Naive thymus-derived CD4-positive, alpha-beta T cell (primary cell): ENCODE measurements at regions of chr4 and their contacts with region 1.

Region 1: DNA sequence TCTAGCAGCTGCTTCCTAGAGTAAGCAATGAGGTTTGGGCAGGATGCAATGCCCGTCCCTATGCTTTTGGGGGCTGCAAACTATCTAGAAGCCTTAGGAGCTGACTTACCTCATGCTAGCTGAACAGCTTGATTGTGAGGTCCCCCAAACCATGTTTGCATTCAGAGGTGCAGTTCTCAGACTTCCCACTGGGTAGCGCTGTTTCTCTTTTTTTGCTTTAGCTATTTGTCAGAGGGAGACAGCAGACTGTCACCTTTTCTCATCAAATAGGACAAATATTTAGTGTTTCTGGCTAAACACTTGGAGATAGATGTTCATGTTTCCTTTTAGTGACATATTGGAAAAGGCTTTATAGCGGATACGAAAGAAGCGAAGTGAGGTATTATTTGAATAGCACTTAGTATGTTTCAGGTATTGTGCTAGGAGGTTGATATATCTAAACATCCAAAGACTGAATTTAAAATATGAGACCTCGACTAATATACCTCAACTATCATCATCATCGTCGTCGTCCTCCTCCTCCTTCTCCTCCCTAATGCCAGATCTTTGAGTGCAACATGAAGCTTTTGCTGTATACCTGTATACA is 18.7 kb upstream of the TMEM192 start:
- DNase-seq: peak; percentile 47 to 85 (median 68)
- ATAC-seq: peak; percentile 89
- H3K4me3 ChIP-seq: no peak overlapping the region
- H3K4me3 Mint-ChIP-seq: peak overlapping the region in 1 of 10 donors; percentile 14
- H3K27ac ChIP-seq: no peak overlapping the region
- H3K27ac Mint-ChIP-seq: peak overlapping the region in 1 of 9 donors; percentile 13
- H3K4me1 ChIP-seq: no peaks in the 10 kb centered on the region
- H3K4me1 Mint-ChIP-seq: peaks cover 4 to 12% (median 10%) of the 10 kb centered on the region in 7 donors
- H3K27me3 ChIP-seq: no peaks in the 10 kb centered on the region
- H3K27me3 Mint-ChIP-seq: peaks cover 0 to 17% (median 5%) of the 10 kb centered on the region in 5 donors

Region 2: GRCh38 chr4:165118256-165118909 is 13.0 kb before region 1 on chr4:
- CTCF ChIA-PET with region 1: interaction called, 12 read pairs
- POLR2A ChIA-PET with region 1: no interaction called
- intact Hi-C with region 1: loop called in 1 of 2 experiments (anchors 1 kb)
- DNase-seq: no peak
- ATAC-seq: no peak
- H3K4me3 ChIP-seq: no peak overlapping the region
- H3K4me3 Mint-ChIP-seq: no peak overlapping the region
- H3K27ac ChIP-seq: no peak overlapping the region
- H3K27ac Mint-ChIP-seq: no peak overlapping the region
- H3K4me1 ChIP-seq: peaks cover 0 to 4% of the 10 kb centered on the region in 2 donors
- H3K4me1 Mint-ChIP-seq: peaks cover 0 to 5% (median under 1%) of the 10 kb centered on the region in 7 donors
- H3K27me3 ChIP-seq: no peaks in the 10 kb centered on the region
- H3K27me3 Mint-ChIP-seq: peaks cover 0 to 35% (median 5%) of the 10 kb centered on the region in 5 donors

Region 3: DNA sequence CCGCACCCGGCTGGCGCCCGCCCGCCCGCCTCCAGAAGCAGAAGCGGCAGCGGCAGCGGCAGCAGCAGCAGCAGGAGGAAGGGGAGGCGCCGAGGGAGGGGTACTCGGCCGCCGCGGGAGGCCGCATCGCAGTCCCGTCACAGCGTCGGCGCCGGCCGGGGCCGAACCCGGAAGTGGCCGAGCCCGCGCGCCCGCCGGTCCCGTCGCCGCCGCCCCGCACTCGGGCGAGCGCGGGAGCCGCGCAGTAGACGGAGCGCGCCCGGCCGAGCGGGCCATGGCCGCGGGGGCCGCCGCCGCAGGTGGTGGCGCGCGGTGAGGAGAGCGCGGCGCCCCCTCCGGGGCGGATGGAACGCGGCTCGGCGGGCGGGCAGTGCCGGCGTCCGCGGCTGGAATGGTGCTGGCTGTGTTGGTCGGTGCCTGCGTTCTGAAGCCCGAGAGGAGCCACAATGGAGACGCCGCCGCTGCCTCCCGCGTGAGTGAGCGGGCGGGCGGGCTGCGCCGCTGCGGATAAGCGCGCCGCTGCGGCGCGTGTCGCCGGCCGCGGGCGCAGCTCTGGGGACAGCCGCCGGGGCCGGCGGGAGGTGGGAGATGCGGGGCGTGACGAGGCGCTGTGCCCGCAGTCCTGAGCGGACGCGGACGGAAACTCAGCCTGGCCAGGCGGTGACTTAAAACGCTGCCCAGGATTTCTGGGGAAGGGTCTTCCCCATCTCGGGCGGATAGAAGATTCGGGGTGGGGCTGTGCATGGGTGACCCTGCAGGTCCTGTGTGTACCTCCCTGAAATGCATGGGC is 76.3 kb after region 1 on chr4 and contains the start of gene KLHL2:
- CTCF ChIA-PET with region 1: interaction called, 3 read pairs
- POLR2A ChIA-PET with region 1: no interaction called
- intact Hi-C with region 1: loop called (anchors 1 to 5 kb)
- DNase-seq: peak; percentile 52 to 78 (median 66)
- ATAC-seq: peak; percentile 88
- H3K4me3 ChIP-seq: peak within 1 kb of the TSS; percentile 89
- H3K4me3 Mint-ChIP-seq: peak within 1 kb of the TSS; percentile 86 to 98 (median 96)
- H3K27ac ChIP-seq: peak within 1 kb of the TSS; percentile 65
- H3K27ac Mint-ChIP-seq: peak within 1 kb of the TSS; percentile 90 to 95 (median 92)
- H3K4me1 ChIP-seq: peaks cover 0 to 33% of the 10 kb centered on the region in 2 donors
- H3K4me1 Mint-ChIP-seq: peaks cover 46 to 75% (median 73%) of the 10 kb centered on the region in 7 donors
- H3K27me3 ChIP-seq: no peaks in the 10 kb centered on the region
- H3K27me3 Mint-ChIP-seq: no peaks in the 10 kb centered on the region
- total RNA-seq, gene KLHL2: 26.9 to 39.9 (median 27.9) TPM

Region 4: GRCh38 chr4:165343353-165344191 is 212.2 kb after region 1 on chr4:
- CTCF ChIA-PET with region 1: interaction called, 68 read pairs
- POLR2A ChIA-PET with region 1: interaction called, 3 read pairs
- intact Hi-C with region 1: loop called (anchors 1 kb)
- DNase-seq: peak in 5 of 9 donors; percentile 2 to 34 (median 21)
- ATAC-seq: peak; percentile 22
- H3K4me3 ChIP-seq: no peak overlapping the region
- H3K4me3 Mint-ChIP-seq: no peak overlapping the region
- H3K27ac ChIP-seq: no peak overlapping the region
- H3K27ac Mint-ChIP-seq: peak overlapping the region in 5 of 9 donors; percentile 41 to 86 (median 66)
- H3K4me1 ChIP-seq: no peaks in the 10 kb centered on the region
- H3K4me1 Mint-ChIP-seq: peaks cover 0 to 3% (median 0%) of the 10 kb centered on the region in 7 donors
- H3K27me3 ChIP-seq: no peaks in the 10 kb centered on the region
- H3K27me3 Mint-ChIP-seq: no peaks in the 10 kb centered on the region

Region 5: DNA sequence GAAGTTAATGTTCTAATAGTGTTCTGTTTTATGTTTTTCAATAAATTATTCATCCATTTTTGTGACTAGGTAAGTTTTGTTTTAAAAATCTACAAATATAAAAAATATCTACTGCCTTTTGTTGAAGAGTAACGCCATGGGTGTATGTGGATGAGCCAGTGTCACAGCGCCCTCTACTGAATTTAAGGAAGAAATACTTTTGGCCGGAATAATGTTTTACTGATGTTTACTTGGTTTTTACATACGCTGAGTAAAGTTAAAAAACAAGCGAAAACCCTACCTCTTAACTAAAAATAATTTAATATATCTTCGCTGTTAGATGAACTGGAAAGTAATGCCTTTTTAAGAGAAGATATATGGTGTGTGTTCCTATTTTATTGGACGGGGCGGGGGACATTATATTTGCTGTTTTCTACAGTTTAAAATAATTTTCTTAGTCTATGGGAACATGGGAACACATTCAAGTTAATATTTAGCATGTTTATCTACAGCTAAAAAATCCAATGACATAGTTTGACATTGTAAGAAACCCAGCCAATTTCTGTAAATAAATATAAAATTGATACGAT is 333.6 kb after region 1 on chr4:
- CTCF ChIA-PET with region 1: interaction called, 21 read pairs
- POLR2A ChIA-PET with region 1: no interaction called
- intact Hi-C with region 1: loop called (anchors 1 kb)
- DNase-seq: peak in 7 of 9 donors; percentile 7 to 59 (median 39)
- ATAC-seq: peak; percentile 76
- H3K4me3 ChIP-seq: no peak overlapping the region
- H3K4me3 Mint-ChIP-seq: no peak overlapping the region
- H3K27ac ChIP-seq: no peak overlapping the region
- H3K27ac Mint-ChIP-seq: no peak overlapping the region
- H3K4me1 ChIP-seq: no peaks in the 10 kb centered on the region
- H3K4me1 Mint-ChIP-seq: no peaks in the 10 kb centered on the region
- H3K27me3 ChIP-seq: no peaks in the 10 kb centered on the region
- H3K27me3 Mint-ChIP-seq: peaks cover 0 to 6% (median 5%) of the 10 kb centered on the region in 5 donors

Region 6: GRCh38 chr4:166091912-166092510 is 960.7 kb after region 1 on chr4:
- CTCF ChIA-PET with region 1: no interaction called
- POLR2A ChIA-PET with region 1: no interaction called
- intact Hi-C with region 1: loop called in 1 of 2 experiments (anchors 10 kb)
- DNase-seq: peak in 3 of 9 donors; percentile 1 to 11 (median 3)
- ATAC-seq: no peak
- H3K4me3 ChIP-seq: no peak overlapping the region
- H3K4me3 Mint-ChIP-seq: no peak overlapping the region
- H3K27ac ChIP-seq: no peak overlapping the region
- H3K27ac Mint-ChIP-seq: no peak overlapping the region
- H3K4me1 ChIP-seq: no peaks in the 10 kb centered on the region
- H3K4me1 Mint-ChIP-seq: no peaks in the 10 kb centered on the region
- H3K27me3 ChIP-seq: no peaks in the 10 kb centered on the region
- H3K27me3 Mint-ChIP-seq: no peaks in the 10 kb centered on the region